Lower lobe of right lung (tissue), 2 donors: ENCODE measurements at regions of chr4 and their contacts with region 1.

Region 1: DNA sequence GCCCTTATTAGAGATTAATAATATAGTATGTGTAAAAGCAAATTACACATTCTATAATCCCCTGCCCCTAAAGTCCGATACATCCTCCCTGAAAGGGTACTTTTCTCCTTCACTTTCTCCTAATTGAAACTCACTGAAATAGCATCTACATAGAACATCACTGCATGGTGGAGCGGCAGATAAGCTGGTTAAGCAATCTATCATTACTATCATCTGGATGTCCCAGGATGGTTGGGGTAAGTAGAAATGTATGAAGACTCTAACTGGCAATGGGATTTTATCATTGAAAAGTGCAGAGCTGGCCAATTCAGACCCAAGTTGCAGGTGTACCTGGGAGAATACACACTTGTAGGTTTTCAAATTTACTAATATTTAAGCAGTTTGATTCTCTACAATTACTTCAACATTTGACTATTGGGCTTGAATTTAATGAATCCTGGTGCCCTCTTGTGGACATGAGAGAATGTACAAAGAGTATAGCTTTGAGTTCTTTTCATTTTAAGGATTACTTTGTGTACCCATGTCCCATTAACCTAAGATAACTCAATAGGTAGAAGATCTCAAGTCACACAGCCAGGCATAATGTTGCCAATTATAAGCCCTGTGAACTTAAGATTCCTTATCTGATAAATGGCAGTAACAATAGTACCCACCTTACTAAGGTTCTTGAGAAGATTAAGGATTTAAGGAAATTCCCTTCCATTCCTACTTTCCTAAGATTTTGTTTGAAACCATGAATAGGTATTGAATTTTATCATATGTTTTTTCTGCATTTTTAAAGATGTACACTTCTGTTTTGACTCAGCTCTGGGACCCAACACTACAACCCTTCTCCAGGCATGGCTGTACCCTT is 69.8 kb downstream of the SHROOM3 start:
- DNase-seq: no peak
- ATAC-seq: peak in 1 of 2 donors; percentile 73
- H3K4me3 ChIP-seq: no peak overlapping the region
- H3K27ac ChIP-seq: no peak overlapping the region
- H3K4me1 ChIP-seq: no peaks in the 10 kb centered on the region
- H3K27me3 ChIP-seq: no peaks in the 10 kb centered on the region
- CTCF ChIP-seq: peak; percentile 67

Region 2: GRCh38 chr4:76283900-76284299 is 220.9 kb before region 1 on chr4:
- intact Hi-C with region 1: no loop called
- DNase-seq: no peak
- ATAC-seq: no peak
- H3K4me3 ChIP-seq: no peak overlapping the region
- H3K27ac ChIP-seq: no peak overlapping the region
- H3K4me1 ChIP-seq: no peaks in the 10 kb centered on the region
- H3K27me3 ChIP-seq: no peaks in the 10 kb centered on the region
- CTCF ChIP-seq: no peak

Region 3: DNA sequence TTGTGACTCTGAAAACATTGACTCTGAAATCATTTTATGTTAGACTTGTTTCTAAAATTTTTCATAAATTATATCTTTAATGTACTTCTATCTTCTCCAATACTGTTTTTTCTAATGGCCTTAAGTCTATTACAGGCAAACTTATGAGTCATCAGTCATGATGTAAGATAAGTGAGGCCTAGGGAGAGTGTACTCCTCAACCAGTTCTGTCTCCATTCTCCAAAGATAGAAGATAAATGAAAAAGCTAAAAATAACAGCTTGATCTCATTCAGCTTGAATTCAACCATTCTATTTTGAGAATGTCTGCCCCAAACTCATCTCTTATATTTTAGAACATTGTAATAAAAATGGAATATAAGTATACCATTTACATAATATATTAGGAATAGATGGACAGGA is 163.8 kb before region 1 on chr4:
- intact Hi-C with region 1: no loop called
- DNase-seq: no peak
- ATAC-seq: peak in 1 of 2 donors; percentile 54
- H3K4me3 ChIP-seq: no peak overlapping the region
- H3K27ac ChIP-seq: no peak overlapping the region
- H3K4me1 ChIP-seq: no peaks in the 10 kb centered on the region
- H3K27me3 ChIP-seq: no peaks in the 10 kb centered on the region
- CTCF ChIP-seq: no peak

Region 4: DNA sequence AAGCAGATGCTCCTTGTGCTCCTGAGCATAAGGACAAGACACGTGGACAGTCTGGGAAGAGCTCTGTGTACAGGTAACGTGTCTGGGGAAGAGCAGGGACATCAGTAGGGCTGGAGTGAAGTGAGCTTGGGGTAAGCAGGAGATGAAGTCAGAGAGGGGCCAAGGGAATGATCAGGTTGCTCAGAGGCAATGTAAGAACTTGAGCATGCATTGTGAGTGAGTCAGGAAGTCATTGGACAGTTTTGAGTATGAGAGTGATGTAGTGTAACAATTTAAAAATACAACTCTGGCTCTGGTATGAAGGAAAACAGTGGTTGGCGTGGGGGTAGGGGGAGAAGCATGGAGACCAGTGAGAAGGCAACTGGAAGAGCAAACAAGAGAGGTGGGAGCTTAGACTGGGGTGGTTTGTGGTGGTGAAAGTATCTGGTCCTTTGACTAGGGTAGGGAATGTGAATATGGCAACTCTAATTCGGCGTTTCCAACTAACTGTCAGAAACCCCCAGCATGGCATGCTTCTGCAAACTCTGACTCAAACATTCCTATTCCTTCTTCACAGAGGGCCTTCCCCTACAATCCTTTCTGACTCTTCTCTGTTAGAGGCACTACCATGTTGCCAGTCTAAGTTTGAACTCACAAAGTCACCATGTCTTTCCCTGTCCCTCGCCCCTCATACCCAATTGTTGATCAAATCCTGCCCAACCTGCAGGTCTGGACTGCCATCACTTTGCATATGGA is 141.1 kb before region 1 on chr4:
- intact Hi-C with region 1: no loop called
- DNase-seq: no peak
- ATAC-seq: no peak
- H3K4me3 ChIP-seq: no peak overlapping the region
- H3K27ac ChIP-seq: no peak overlapping the region
- H3K4me1 ChIP-seq: no peaks in the 10 kb centered on the region
- H3K27me3 ChIP-seq: no peaks in the 10 kb centered on the region
- CTCF ChIP-seq: no peak

Region 5: DNA sequence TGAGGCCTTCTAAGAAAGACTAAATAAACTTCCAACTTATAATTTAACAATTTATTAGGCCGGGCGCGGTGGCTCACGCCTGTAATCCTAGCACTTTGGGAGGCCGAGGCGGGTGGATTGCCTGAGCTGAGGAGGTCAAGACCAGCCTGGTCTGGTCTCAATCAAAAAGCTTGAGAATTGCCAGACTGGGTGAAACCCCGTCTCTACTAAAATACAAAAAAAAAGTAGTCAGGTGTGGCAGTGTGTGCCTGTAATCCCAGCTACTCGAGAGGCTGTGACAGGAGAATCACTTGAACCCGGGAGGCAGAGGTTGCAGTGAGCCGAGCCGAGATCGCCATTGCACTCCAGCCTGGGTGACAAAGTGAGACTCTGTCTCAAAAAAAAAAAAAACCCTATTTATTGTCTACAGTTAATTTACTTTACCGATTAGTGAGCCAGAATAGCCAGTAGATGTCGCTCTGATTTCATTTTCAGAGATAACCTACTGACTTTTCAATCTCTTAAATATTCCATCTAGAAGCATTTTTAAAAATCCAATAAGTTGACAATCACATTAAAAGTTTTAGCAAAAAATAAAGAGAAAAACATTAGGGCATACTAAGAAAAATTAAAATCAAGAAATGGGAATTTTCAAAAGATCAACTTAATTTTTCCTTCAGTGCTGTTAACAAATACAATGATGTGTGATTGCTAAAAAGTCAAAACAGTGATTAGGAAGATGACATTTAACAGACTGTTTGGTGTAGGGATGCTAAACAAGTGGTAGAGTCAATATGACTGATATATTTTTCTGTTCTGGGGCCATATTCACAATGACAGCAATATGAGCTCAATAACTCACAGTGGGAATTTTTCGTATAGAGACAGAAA is 74.1 kb before region 1 on chr4:
- intact Hi-C with region 1: loop called (anchors 10 kb)
- DNase-seq: no peak
- ATAC-seq: no peak
- H3K4me3 ChIP-seq: no peak overlapping the region
- H3K27ac ChIP-seq: no peak overlapping the region
- H3K4me1 ChIP-seq: no peaks in the 10 kb centered on the region
- H3K27me3 ChIP-seq: no peaks in the 10 kb centered on the region
- CTCF ChIP-seq: peak; percentile 67

Region 6: DNA sequence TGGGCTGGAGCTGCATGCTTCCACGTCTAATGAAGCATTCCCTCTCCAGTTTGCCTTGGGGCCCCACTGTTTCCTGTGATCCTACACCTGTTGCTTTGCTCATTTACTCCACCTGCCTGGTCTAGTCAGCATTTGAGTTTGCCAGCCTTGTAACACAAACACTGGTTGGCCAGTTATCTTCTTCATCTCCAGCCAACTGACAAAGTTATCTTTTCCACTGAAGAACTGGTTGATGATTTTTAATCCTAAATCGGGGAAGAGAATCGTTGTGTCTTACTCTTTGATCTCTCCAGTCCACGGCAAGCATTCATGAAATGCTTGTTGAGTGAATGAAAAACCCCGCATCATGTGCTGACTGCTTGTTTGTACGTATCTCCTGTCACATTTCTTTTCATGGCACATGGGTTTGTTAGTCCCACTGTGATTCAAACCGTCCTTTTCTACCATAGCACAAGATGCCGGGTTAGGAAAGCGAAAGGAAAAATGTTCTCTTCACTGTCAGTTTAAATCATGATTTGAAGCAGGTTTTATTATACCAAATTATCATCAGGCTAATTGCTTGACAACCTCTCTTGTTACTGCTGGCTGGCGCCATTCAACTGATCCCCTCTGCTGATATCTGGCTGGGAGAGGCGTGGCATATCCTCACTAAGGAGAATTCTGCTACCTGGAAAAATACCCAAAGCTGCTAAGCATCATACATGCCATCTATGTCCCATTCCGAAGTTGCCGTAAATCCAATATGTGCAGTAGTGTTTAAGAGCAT is 75.0 kb after region 1 on chr4:
- intact Hi-C with region 1: no loop called
- DNase-seq: no peak
- ATAC-seq: no peak
- H3K4me3 ChIP-seq: no peak overlapping the region
- H3K27ac ChIP-seq: no peak overlapping the region
- H3K4me1 ChIP-seq: peaks cover 3% of the 10 kb centered on the region
- H3K27me3 ChIP-seq: no peaks in the 10 kb centered on the region
- CTCF ChIP-seq: no peak